Activated CD4-positive, alpha-beta T cell treated with anti-CD3 and anti-CD28 coated beads for 36 hours (primary cell): ENCODE measurements at regions of chr1 and their contacts with region 1.

Region 1: GRCh38 chr1:8817406-8818324 is at the start of gene RERE:
- DNase-seq: peak; percentile 97
- ATAC-seq: peak; percentile 95
- H3K4me3 Mint-ChIP-seq: peak within 1 kb of the TSS; percentile 77
- H3K27ac Mint-ChIP-seq: peak within 1 kb of the TSS; percentile 96
- H3K4me1 Mint-ChIP-seq: peaks cover 44% of the 10 kb centered on the region
- H3K27me3 Mint-ChIP-seq: peaks cover 2% of the 10 kb centered on the region
- total RNA-seq, gene RERE: 57.4 to 71.6 TPM

Region 2: GRCh38 chr1:8423650-8424538 is 393.8 kb before region 1 on chr1:
- CTCF ChIA-PET with region 1: no interaction called
- POLR2A ChIA-PET with region 1: no interaction called
- intact Hi-C with region 1: loop called in 1 of 2 experiments (anchors 5 kb)
- DNase-seq: peak; percentile 77
- ATAC-seq: peak; percentile 66
- H3K4me3 Mint-ChIP-seq: peak overlapping the region; percentile 84
- H3K27ac Mint-ChIP-seq: peak overlapping the region; percentile 97
- H3K4me1 Mint-ChIP-seq: peaks cover 42% of the 10 kb centered on the region
- H3K27me3 Mint-ChIP-seq: no peaks in the 10 kb centered on the region

Region 3: GRCh38 chr1:8752921-8753713 is 64.5 kb before region 1 on chr1:
- CTCF ChIA-PET with region 1: no interaction called
- POLR2A ChIA-PET with region 1: no interaction called
- intact Hi-C with region 1: loop called in 1 of 2 experiments (anchors 2 kb)
- DNase-seq: no peak
- ATAC-seq: no peak
- H3K4me3 Mint-ChIP-seq: no peak overlapping the region
- H3K27ac Mint-ChIP-seq: no peak overlapping the region
- H3K4me1 Mint-ChIP-seq: peaks cover 30% of the 10 kb centered on the region
- H3K27me3 Mint-ChIP-seq: no peaks in the 10 kb centered on the region

Region 4: GRCh38 chr1:8782001-8782620 is 35.6 kb before region 1 on chr1:
- CTCF ChIA-PET with region 1: no interaction called
- POLR2A ChIA-PET with region 1: no interaction called
- intact Hi-C with region 1: no loop called
- DNase-seq: no peak
- ATAC-seq: no peak
- H3K4me3 Mint-ChIP-seq: no peak overlapping the region
- H3K27ac Mint-ChIP-seq: no peak overlapping the region
- H3K4me1 Mint-ChIP-seq: peaks cover 17% of the 10 kb centered on the region
- H3K27me3 Mint-ChIP-seq: no peaks in the 10 kb centered on the region

Region 5: GRCh38 chr1:8835941-8836643 is 18.4 kb after region 1 on chr1:
- CTCF ChIA-PET with region 1: no interaction called
- POLR2A ChIA-PET with region 1: no interaction called
- intact Hi-C with region 1: no loop called
- DNase-seq: no peak
- ATAC-seq: no peak
- H3K4me3 Mint-ChIP-seq: no peak overlapping the region
- H3K27ac Mint-ChIP-seq: no peak overlapping the region
- H3K4me1 Mint-ChIP-seq: peaks cover 2% of the 10 kb centered on the region
- H3K27me3 Mint-ChIP-seq: no peaks in the 10 kb centered on the region

Region 6: GRCh38 chr1:8858888-8859706 is 41.4 kb after region 1 on chr1:
- CTCF ChIA-PET with region 1: interaction called, 4 read pairs
- POLR2A ChIA-PET with region 1: no interaction called
- intact Hi-C with region 1: loop called in 1 of 2 experiments (anchors 5 kb)
- DNase-seq: peak; percentile 67
- ATAC-seq: peak; percentile 55
- H3K4me3 Mint-ChIP-seq: peak overlapping the region; percentile 15
- H3K27ac Mint-ChIP-seq: peak overlapping the region; percentile 71
- H3K4me1 Mint-ChIP-seq: peaks cover 31% of the 10 kb centered on the region
- H3K27me3 Mint-ChIP-seq: no peaks in the 10 kb centered on the region

Region 7: DNA sequence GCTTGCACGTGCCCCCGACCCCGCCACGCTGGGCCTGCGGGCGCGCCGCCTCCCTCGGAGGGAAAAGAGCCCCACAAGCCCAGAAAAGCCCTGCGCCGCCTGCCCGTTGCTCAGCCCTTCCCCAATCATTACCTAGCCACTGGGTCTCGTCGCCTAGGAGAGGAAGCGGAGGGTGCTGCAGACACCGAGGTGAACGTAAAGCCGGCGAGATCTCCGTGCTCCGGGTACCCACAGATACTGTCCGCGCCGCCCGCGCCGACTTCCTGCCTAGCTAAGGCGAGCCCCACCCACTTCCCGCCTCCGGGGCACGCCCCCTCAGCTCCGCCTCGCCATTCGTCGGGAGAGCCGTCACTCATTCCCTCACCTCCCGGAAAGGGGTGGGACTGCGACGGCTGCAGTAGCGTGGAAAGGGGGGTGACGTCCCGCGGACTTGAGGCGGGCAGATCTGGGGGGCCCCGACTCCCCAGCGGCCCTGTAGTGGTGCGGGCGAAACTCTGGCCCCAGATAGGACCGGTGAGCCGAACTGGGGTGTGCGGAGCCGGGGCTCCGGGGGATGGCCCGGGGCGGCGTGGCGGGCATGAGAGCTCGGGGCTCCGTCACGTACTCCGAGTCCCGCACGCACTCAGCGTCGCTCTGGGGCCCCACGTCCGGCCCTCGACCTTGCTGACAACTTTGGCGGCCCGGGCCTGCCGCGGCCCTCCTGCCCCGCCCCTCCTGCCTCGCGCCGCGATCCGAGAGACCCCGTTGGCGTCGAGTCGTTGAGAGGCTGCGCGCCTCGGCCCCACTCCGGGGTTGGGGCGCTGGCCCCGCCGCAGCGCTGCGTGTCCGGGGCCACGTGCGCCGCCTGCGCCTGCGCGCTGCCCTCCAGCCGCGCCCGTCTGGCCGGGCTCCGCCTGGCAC is 61.0 kb after region 1 on chr1 and contains the start of gene ENO1:
- CTCF ChIA-PET with region 1: interaction called, 3 read pairs
- POLR2A ChIA-PET with region 1: no interaction called
- intact Hi-C with region 1: loop called in 1 of 2 experiments (anchors 1 kb)
- DNase-seq: peak; percentile 99
- ATAC-seq: peak; percentile 72
- H3K4me3 Mint-ChIP-seq: peak within 1 kb of the TSS; percentile 90
- H3K27ac Mint-ChIP-seq: peak within 1 kb of the TSS; percentile 99
- H3K4me1 Mint-ChIP-seq: peaks cover 35% of the 10 kb centered on the region
- H3K27me3 Mint-ChIP-seq: no peaks in the 10 kb centered on the region
- total RNA-seq, gene ENO1: 2,573 to 3,583 TPM

Region 8: GRCh38 chr1:8910914-8911313 is 93.2 kb after region 1 on chr1:
- CTCF ChIA-PET with region 1: no interaction called
- POLR2A ChIA-PET with region 1: interaction called, 11 read pairs
- intact Hi-C with region 1: no loop called
- DNase-seq: no peak
- ATAC-seq: peak; percentile 36
- H3K4me3 Mint-ChIP-seq: no peak overlapping the region
- H3K27ac Mint-ChIP-seq: no peak overlapping the region
- H3K4me1 Mint-ChIP-seq: peaks cover 2% of the 10 kb centered on the region
- H3K27me3 Mint-ChIP-seq: no peaks in the 10 kb centered on the region